ENCODE measurements at regions of chr1 and their contacts with region 1.

Region 1: DNA sequence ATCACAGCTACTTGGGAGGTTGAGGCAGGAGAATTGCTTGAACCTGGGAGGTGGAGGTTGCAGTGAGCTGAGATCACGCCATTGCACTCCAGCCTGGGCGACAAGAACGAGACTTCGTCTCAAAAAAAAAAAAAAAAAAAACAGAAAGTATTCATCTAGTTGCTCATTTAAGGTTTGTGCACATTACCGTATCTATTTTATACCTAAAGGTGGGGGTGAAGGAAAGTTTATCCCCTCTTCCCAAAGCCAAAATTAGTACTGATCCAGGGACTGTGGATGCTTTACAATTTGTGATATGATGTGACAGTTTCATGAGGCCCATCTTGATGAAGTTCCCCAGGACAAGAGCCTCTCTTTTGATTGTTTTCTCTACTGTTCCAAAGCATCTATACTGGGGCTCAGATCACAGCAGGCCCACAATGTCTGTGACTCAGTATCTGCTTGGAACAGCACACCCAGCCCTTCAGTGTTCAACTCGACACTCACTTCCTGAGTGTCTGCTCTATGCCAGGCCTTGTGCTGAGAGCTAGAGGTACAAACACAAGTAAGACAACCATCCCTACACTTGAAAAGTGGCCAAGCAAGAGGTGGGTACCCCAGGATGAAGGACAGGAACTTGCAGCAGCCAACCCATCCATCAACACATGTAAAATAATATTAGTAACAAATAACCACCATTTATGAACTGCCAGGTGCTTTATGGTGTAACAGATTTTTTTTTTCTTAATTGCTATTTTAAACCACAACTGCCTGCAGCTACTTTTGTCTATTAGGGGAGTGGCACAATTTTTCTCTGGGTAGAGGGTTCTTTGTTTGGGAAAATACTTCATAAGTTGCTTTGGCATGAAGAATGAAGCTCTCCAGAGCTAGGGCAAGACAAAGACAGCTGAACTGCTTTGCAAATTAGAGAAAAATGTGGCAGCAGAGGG is 29.0 kb upstream of the KHDRBS1 start:
- DNase-seq: no peak
- ATAC-seq: 0 out of 2 replicates have a peak, but pooled peaks have one; percentile 48
- H3K4me3 ChIP-seq: no peak overlapping the region
- H3K27ac ChIP-seq: no peak overlapping the region
- H3K4me1 ChIP-seq: peaks cover 3% of the 10 kb centered on the region; the same call in 1 of the 2 replicates
- H3K27me3 ChIP-seq: no peaks in the 10 kb centered on the region
- CTCF ChIP-seq: no peak

Region 2: GRCh38 chr1:31995263-31995662 is 10.6 kb after region 1 on chr1:
- CTCF ChIA-PET with region 1: interaction called, 3 read pairs
- POLR2A ChIA-PET with region 1: interaction called, 11 read pairs
- in situ Hi-C with region 1: no loop called
- intact Hi-C with region 1: no loop called
- DNase-seq: no peak
- ATAC-seq: no peak
- H3K4me3 ChIP-seq: no peak overlapping the region
- H3K27ac ChIP-seq: no peak overlapping the region
- H3K4me1 ChIP-seq: no peaks in the 10 kb centered on the region
- H3K27me3 ChIP-seq: no peaks in the 10 kb centered on the region
- CTCF ChIP-seq: no peak

Region 3: DNA sequence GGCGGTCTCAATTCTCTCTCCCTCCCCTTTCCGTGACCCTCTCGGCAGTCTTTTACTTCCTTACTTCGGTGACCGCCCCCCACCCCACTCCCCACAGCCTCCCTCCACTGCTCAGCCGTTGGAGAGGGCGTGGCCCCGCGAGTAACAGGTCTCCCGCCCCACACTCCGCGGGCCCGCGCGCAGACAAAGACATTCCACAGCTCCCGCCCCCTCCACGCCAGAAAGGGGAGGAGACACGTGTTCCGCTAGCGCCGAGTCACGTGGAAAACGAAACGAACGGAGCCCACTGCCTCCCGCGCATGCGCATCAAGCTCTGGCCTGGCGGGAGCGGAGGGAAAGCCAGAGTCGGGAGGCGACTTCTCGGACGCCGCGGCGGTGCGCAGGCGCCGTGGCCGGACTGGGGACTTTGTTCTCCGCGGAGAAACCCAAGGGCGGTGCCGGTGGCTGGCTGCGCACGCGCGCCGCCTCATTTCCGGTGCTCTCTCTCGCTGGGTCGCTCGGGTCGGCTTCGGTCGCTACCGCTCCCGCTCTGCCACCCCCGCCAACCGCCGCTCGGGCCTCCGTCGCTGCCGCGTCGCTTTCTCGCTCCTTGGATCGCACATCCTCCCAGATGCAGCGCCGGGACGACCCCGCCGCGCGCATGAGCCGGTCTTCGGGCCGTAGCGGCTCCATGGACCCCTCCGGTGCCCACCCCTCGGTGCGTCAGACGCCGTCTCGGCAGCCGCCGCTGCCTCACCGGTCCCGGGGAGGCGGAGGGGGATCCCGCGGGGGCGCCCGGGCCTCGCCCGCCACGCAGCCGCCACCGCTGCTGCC is 28.9 kb after region 1 on chr1 and contains the start of gene KHDRBS1:
- CTCF ChIA-PET with region 1: interaction called, 10 read pairs
- POLR2A ChIA-PET with region 1: interaction called, 12 read pairs
- in situ Hi-C with region 1: no loop called
- intact Hi-C with region 1: no loop called
- DNase-seq: peak; percentile 93
- ATAC-seq: peak; percentile 91
- H3K4me3 ChIP-seq: peak within 1 kb of the TSS; percentile 78 to 96
- H3K27ac ChIP-seq: peak within 1 kb of the TSS; percentile 99
- H3K4me1 ChIP-seq: peaks cover 11% of the 10 kb centered on the region
- H3K27me3 ChIP-seq: no peaks in the 10 kb centered on the region
- CTCF ChIP-seq: no peak
- total RNA-seq, gene KHDRBS1: 163 TPM

Region 4: GRCh38 chr1:32179443-32180185 is 194.9 kb after region 1 on chr1 and contains the start of gene TXLNA:
- CTCF ChIA-PET with region 1: no interaction called
- POLR2A ChIA-PET with region 1: interaction called, 18 read pairs
- in situ Hi-C with region 1: no loop called
- intact Hi-C with region 1: no loop called
- DNase-seq: peak; percentile 63
- ATAC-seq: peak; percentile 96
- H3K4me3 ChIP-seq: peak within 1 kb of the TSS; percentile 77 to 93
- H3K27ac ChIP-seq: peak within 1 kb of the TSS; percentile 97
- H3K4me1 ChIP-seq: peaks cover 33% of the 10 kb centered on the region
- H3K27me3 ChIP-seq: no peaks in the 10 kb centered on the region
- CTCF ChIP-seq: no peak
- total RNA-seq, gene TXLNA: 115 TPM

Measured in Panc1 (cell line).